ENCODE measurements at regions of chr7 and their contacts with region 1.

Region 1: DNA sequence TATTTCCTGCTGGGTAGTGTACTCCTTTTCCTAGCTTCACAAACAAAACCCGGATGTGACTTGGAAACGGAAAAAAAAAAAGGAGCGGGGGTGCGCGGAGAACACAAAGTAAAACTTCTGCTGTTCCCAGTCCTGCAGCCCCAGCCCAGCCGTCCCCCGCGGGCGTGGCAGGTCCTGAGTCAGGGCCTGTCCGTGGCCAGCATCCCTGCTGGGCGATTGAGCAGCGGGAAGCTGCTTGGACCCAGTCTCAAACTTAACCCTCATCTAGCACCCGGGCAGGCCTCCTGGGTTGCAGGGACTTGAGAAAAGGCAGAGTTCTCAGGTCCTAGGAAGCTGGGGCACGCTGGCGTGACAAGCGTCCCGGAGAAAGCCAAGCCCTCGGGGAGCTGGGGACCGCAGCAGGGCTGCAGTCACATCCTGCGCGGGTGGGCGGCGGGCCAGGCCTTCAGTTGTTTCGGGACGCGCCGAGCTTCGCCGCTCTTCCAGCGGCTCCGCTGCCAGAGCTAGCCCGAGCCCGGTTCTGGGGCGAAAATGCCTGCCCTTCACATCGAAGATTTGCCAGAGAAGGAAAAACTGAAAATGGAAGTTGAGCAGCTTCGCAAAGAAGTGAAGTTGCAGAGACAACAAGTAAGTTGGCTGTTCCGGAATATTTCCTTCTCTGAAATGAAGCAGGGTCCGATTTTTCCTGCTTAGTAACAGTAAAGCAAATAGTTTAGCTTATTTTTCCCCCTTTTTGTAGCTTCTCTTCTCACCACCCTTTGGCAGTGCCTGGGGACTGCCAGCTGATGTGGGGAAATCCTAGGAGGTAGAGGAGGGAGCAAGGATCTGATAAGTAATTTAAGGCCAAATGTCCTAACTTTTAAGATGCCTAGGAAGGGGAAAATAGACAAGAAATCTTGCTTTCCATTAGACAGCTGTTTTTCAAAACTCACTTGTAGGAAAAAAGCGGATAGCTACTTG is at the start of gene GNG11:
- DNase-seq: peak; percentile 90
- H3K4me3 ChIP-seq: peak within 1 kb of the TSS; percentile 95 to 100 (median 100)
- H3K27ac ChIP-seq: peak within 1 kb of the TSS; percentile 99
- H3K4me1 ChIP-seq: peaks cover 25% of the 10 kb centered on the region
- H3K27me3 ChIP-seq: no peaks in the 10 kb centered on the region
- CTCF ChIP-seq: no peak
- POLR2A ChIP-seq: peak; percentile 86
- total RNA-seq, gene GNG11: 208 and 215 TPM in 2 replicates

Region 2: DNA sequence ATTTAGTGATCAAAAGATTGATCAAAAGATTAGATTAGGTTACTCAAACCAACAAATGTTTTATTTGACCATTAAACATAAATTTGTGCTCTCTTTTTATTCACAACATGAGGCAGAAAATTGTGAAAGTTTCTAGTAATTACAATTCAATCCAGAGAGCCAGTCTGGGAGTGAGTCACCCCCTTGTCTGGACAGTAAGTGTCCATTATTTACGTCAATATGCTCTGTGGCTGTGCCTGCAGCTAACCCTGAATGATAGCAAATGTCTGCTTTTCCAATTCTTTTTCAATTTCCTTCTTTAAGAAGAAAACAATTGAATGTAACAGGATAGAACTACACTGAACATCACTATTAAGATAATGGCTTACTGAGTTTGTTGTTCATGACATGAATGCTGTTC is 27.6 kb after region 1 on chr7:
- CTCF ChIA-PET with region 1: interaction called, 4 read pairs
- POLR2A ChIA-PET with region 1: no interaction called
- dilution Hi-C with region 1: no loop called
- intact Hi-C with region 1: loop called (anchors 1 kb)
- DNase-seq: peak; percentile 84
- H3K4me3 ChIP-seq: no peak overlapping the region
- H3K27ac ChIP-seq: peak overlapping the region; percentile 72
- H3K4me1 ChIP-seq: peaks cover 38% of the 10 kb centered on the region
- H3K27me3 ChIP-seq: no peaks in the 10 kb centered on the region
- CTCF ChIP-seq: no peak
- POLR2A ChIP-seq: no peak

Region 3: GRCh38 chr7:94004024-94004951 is 82.4 kb after region 1 on chr7 and contains the start of gene BET1:
- CTCF ChIA-PET with region 1: no interaction called
- POLR2A ChIA-PET with region 1: no interaction called
- dilution Hi-C with region 1: no loop called
- intact Hi-C with region 1: loop called (anchors 1 kb)
- DNase-seq: peak; percentile 96
- H3K4me3 ChIP-seq: peak within 1 kb of the TSS; percentile 85 to 95 (median 87)
- H3K27ac ChIP-seq: peak within 1 kb of the TSS; percentile 76
- H3K4me1 ChIP-seq: peaks cover 16% of the 10 kb centered on the region
- H3K27me3 ChIP-seq: peaks cover 10 to 23% of the 10 kb centered on the region in 2 experiments
- CTCF ChIP-seq: no peak
- POLR2A ChIP-seq: peak; percentile 66
- total RNA-seq, gene BET1: 23.9 and 28.4 TPM in 2 replicates

Region 4: DNA sequence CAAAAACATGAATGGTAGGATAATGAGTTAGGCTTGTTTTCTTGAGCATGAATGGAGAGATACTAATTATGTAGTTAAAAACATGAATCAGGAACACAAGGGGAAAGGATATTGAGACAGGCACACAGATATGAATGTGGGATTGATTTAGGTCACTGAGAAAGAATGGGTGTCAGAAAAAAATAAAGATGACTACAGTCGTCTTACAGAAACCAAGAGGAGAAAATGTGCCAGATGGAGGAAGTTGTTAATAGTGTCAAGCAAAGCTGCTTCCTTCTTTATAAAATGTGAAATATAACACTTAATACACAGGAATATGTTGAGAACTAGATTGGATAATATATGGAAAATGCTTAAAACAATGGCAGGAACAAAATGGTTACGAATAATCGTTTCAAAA is 255.6 kb after region 1 on chr7:
- CTCF ChIA-PET with region 1: no interaction called
- POLR2A ChIA-PET with region 1: no interaction called
- dilution Hi-C with region 1: no loop called
- intact Hi-C with region 1: loop called (anchors 1 kb)
- DNase-seq: peak; percentile 96
- H3K4me3 ChIP-seq: no peak overlapping the region
- H3K27ac ChIP-seq: peak overlapping the region; percentile 89
- H3K4me1 ChIP-seq: peaks cover 67% of the 10 kb centered on the region
- H3K27me3 ChIP-seq: no peaks in the 10 kb centered on the region
- CTCF ChIP-seq: no peak
- POLR2A ChIP-seq: no peak

Measured in endothelial cell of umbilical vein (primary cell).